ENCODE measurements at regions of chr12 and their contacts with region 1.

Region 1: DNA sequence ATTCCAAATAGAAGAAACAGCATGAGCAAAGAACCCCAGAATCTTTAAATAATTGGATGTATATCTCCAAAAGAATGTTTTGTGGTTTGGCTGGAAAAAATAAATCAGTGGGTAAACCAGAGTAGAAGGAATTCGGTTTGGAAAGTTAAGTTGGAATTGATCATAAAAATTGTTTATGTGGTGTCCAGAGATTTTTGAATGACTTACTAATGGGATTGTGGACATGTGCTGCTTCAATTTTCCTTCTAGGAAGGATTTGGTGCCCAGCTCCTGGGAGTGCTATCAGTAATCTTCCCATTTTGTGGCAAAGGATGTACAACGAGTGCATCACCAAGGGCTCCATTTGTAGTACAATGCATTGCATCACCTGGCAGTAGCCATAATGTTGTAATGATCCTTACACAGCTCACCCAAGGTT is 224.8 kb downstream of the SLC16A7 start:
- DNase-seq: no peak
- H3K4me3 ChIP-seq: no peak overlapping the region
- H3K27ac ChIP-seq: peak overlapping the region in 13 of 59 donors; percentile 1 to 65 (median 16)
- H3K27me3 ChIP-seq: no peaks in the 10 kb centered on the region
- CTCF ChIP-seq: no peak

Region 2: GRCh38 chr12:59219148-59219547 is 601.5 kb before region 1 on chr12:
- intact Hi-C with region 1: no loop called
- DNase-seq: no peak
- H3K4me3 ChIP-seq: no peak overlapping the region
- H3K27ac ChIP-seq: no peak overlapping the region
- H3K27me3 ChIP-seq: no peaks in the 10 kb centered on the region
- CTCF ChIP-seq: no peak

Region 3: GRCh38 chr12:59871779-59872178 is 51.2 kb after region 1 on chr12:
- intact Hi-C with region 1: no loop called
- DNase-seq: no peak
- H3K4me3 ChIP-seq: no peak overlapping the region
- H3K27ac ChIP-seq: no peak overlapping the region
- H3K27me3 ChIP-seq: no peaks in the 10 kb centered on the region
- CTCF ChIP-seq: no peak

Region 4: GRCh38 chr12:60489071-60489470 is 668.5 kb after region 1 on chr12:
- intact Hi-C with region 1: loop called in 1 of 2 experiments (anchors 10 kb)
- DNase-seq: no peak
- H3K4me3 ChIP-seq: no peak overlapping the region
- H3K27ac ChIP-seq: no peak overlapping the region
- H3K27me3 ChIP-seq: no peaks in the 10 kb centered on the region
- CTCF ChIP-seq: no peak